Calu3 (cell line): ENCODE measurements at regions of chr16 and their contacts with region 1.

Region 1: DNA sequence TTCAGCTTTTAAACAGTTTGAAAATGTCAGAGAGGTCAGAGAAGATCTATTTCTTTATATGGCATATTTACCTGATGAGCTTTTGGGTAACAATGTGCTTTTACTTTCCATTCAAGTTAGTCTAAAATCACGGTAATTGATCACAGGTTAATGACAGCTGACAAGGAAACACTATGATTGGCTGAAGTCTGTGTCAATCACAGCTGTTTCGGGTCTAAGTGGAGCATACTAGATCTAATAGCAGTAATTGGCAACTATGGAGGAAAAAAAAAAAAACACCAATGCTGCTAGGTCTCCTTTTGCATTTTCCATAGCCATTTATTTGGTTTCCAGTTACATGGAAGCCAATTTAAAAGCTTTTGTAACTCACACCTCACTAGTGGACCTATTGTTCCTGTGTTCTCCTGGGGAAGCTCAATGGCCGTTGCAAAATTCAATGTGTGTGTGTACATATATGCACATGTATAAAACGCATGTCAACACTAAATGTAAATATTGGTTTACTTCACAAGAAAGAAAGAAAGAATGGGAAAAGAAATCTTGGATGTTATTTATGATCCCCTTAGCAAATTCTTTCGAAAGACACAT is 568.3 kb upstream of the ZFHX3 start:
- DNase-seq: no peak
- H3K4me3 Mint-ChIP-seq: no peak overlapping the region
- H3K27ac Mint-ChIP-seq: no peak overlapping the region
- H3K4me1 Mint-ChIP-seq: peaks cover 11% of the 10 kb centered on the region
- H3K27me3 Mint-ChIP-seq: peaks cover 100% of the 10 kb centered on the region
- CTCF ChIP-seq: no peak

Region 2: DNA sequence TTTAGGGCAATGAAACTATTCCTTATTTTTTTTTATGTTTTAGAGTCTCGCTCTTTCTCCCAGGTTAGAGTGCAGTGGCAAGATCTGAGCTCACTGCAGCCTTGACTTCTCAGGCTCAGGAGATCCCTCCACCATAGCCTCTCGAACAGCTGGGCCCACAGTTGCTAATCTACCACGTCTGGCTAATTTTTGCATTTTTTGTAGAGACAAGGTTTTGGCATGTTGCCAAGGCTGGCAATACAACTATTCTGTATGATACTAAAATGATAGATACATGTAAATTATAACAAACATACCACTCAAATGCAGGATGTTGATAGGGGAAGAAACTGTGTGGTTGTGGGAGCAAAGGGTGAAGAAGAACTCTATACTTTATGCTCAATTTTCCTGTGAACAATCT is 969.6 kb before region 1 on chr16:
- CTCF ChIA-PET with region 1: interaction called, 12 read pairs
- intact Hi-C with region 1: no loop called
- DNase-seq: no peak
- H3K4me3 Mint-ChIP-seq: no peak overlapping the region
- H3K27ac Mint-ChIP-seq: no peak overlapping the region
- H3K4me1 Mint-ChIP-seq: no peaks in the 10 kb centered on the region
- H3K27me3 Mint-ChIP-seq: no peaks in the 10 kb centered on the region
- CTCF ChIP-seq: no peak

Region 3: GRCh38 chr16:73254983-73255382 is 361.3 kb before region 1 on chr16:
- CTCF ChIA-PET with region 1: no interaction called
- intact Hi-C with region 1: no loop called
- DNase-seq: no peak
- H3K4me3 Mint-ChIP-seq: no peak overlapping the region
- H3K27ac Mint-ChIP-seq: no peak overlapping the region
- H3K4me1 Mint-ChIP-seq: no peaks in the 10 kb centered on the region
- H3K27me3 Mint-ChIP-seq: no peaks in the 10 kb centered on the region
- CTCF ChIP-seq: no peak

Region 4: DNA sequence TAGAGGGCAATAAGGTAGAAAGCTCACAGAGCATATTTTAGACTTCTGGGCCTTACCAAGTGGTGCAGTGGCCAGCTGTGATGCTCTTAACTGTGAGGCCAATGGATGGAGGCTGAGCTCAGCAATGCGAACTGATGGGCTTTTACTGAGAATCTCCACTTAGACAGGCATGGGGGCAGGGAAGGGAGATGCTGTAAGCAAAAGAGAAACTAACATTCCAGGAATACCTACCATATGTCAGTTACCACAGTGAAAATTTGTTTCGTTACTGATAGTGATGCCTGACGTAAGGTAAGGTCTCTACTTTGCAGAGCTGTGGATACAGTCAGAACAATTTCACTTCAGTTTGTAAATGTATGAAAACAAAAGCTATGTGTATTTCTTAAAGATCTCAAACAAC is 317.7 kb before region 1 on chr16:
- CTCF ChIA-PET with region 1: no interaction called
- intact Hi-C with region 1: no loop called
- DNase-seq: no peak
- H3K4me3 Mint-ChIP-seq: no peak overlapping the region
- H3K27ac Mint-ChIP-seq: no peak overlapping the region
- H3K4me1 Mint-ChIP-seq: no peaks in the 10 kb centered on the region
- H3K27me3 Mint-ChIP-seq: peaks cover 44% of the 10 kb centered on the region
- CTCF ChIP-seq: no peak

Region 5: GRCh38 chr16:73496616-73497015 is 119.6 kb before region 1 on chr16:
- CTCF ChIA-PET with region 1: no interaction called
- intact Hi-C with region 1: no loop called
- DNase-seq: no peak
- H3K4me3 Mint-ChIP-seq: no peak overlapping the region
- H3K27ac Mint-ChIP-seq: no peak overlapping the region
- H3K4me1 Mint-ChIP-seq: no peaks in the 10 kb centered on the region
- H3K27me3 Mint-ChIP-seq: peaks cover 62% of the 10 kb centered on the region
- CTCF ChIP-seq: no peak